ENCODE measurements at regions of chr10 and their contacts with region 1.

Region 1: GRCh38 chr10:32600317-32600716 is 154.4 kb downstream of the CCDC7 start:
- DNase-seq: no peak
- H3K4me3 ChIP-seq: no peak overlapping the region
- H3K4me3 Mint-ChIP-seq: no peak overlapping the region
- H3K27ac ChIP-seq: no peak overlapping the region
- H3K27ac Mint-ChIP-seq: no peak overlapping the region
- H3K4me1 ChIP-seq: no peaks in the 10 kb centered on the region
- H3K4me1 Mint-ChIP-seq: peaks cover 0 to 5% (median under 1%) of the 10 kb centered on the region in 4 donors
- H3K27me3 ChIP-seq: no peaks in the 10 kb centered on the region
- H3K27me3 Mint-ChIP-seq: no peaks in the 10 kb centered on the region

Region 2: GRCh38 chr10:33386971-33387370 is 786.7 kb after region 1 on chr10:
- CTCF ChIA-PET with region 1: no interaction called
- POLR2A ChIA-PET with region 1: no interaction called
- intact Hi-C with region 1: loop called (anchors 5 kb)
- DNase-seq: no peak
- H3K4me3 ChIP-seq: no peak overlapping the region
- H3K4me3 Mint-ChIP-seq: no peak overlapping the region
- H3K27ac ChIP-seq: no peak overlapping the region
- H3K27ac Mint-ChIP-seq: no peak overlapping the region
- H3K4me1 ChIP-seq: no peaks in the 10 kb centered on the region
- H3K4me1 Mint-ChIP-seq: no peaks in the 10 kb centered on the region
- H3K27me3 ChIP-seq: no peaks in the 10 kb centered on the region
- H3K27me3 Mint-ChIP-seq: peaks cover 19 to 20% of the 10 kb centered on the region in 2 donors